ENCODE measurements at regions of chr21 and their contacts with region 1.

Region 1: DNA sequence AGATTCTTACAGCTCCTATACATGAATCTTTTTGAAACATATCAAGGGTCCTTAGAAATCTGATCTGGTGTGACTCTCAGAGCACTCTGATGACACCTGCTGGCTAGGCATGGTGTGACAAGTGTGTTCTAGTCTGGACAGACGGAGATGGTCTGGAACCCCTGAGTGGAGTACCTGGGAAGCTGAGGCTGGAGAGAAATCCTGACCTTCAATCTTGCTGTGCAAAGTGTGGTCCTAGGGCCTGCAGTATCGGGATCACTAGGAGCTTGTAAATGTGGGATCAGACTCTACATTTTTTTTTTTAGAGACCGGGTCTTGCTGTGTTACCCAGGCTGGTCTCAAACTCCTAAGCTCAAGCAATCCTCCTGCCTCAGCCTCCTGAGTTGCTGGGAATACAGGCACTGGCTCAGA is 78.6 kb upstream of the SOD1 start:
- DNase-seq: peak; percentile 35 to 81
- ATAC-seq: peak; percentile 80

Region 2: DNA sequence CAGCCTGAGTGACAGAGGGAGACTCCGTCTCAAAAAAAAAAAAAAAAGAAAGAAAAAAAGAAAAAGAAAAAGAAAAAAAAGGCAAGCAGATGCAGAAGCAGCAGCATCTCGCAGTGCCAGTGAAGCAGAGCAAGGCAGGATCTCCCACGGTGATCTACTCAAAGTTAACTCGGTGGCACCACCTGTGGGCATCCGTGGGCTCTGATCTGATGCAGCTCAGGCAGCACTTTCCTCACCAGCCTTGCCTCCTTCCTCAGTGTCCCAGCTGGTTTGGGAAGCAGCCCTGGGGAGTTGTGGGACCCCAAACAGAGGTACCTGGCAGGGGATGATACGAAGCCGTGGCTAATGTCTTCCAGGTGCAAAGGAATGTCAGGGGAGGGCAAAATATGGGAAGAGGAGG is 438.3 kb before region 1 on chr21:
- intact Hi-C with region 1: no loop called
- DNase-seq: no peak
- ATAC-seq: no peak

Region 3: GRCh38 chr21:31198575-31198974 is 382.3 kb before region 1 on chr21:
- intact Hi-C with region 1: loop called (anchors 5 to 10 kb)
- DNase-seq: no peak
- ATAC-seq: peak; percentile 67

Region 4: DNA sequence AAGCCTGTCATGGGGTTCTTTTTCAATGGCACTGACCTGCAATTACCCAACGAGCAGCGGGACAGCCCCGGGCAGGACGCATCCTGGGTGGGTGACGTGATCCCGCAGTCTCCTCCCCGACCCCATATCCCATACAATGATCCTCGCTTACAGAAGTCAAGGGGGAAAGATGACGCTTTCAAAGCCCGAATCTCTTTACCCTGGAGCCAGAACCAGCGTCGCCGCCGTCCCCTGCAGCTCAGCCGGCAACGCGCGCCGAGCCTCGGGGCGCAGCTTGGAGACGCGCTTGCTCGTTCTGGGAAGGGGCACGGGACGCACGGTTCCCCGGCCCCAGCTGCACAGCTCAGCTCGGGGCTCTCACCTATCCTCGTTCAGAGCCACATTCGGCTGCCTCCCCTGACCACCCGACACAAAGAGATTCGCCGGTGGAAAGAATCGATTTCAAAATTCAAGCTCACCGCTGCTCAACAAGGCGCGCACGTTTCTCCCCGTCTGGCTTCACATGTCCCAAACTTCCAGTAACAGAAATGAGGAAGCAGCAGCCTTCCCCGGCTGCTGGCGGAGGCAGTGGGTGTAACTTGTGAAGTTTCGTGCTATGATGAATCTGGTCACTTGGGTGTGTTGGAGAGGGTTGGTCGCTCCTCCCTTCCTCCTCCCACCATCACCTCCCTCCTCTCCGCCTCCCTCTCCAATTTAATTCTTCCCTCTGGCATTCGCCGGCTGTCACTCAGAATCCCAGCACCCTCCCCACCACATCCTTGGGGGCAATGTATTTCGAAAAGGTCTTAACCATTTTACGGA is 237.0 kb before region 1 on chr21 and contains the start of gene TIAM1:
- intact Hi-C with region 1: loop called in 1 of 2 experiments (anchors 10 kb)
- DNase-seq: peak; percentile 28 to 39
- ATAC-seq: peak; percentile 63
- total RNA-seq, gene TIAM1: 6.4 to 6.9 TPM

Region 5: GRCh38 chr21:31644643-31645042 is 63.8 kb after region 1 on chr21:
- intact Hi-C with region 1: no loop called
- DNase-seq: peak in 1 of 2 donors; percentile 62
- ATAC-seq: peak; percentile 96

Region 6: DNA sequence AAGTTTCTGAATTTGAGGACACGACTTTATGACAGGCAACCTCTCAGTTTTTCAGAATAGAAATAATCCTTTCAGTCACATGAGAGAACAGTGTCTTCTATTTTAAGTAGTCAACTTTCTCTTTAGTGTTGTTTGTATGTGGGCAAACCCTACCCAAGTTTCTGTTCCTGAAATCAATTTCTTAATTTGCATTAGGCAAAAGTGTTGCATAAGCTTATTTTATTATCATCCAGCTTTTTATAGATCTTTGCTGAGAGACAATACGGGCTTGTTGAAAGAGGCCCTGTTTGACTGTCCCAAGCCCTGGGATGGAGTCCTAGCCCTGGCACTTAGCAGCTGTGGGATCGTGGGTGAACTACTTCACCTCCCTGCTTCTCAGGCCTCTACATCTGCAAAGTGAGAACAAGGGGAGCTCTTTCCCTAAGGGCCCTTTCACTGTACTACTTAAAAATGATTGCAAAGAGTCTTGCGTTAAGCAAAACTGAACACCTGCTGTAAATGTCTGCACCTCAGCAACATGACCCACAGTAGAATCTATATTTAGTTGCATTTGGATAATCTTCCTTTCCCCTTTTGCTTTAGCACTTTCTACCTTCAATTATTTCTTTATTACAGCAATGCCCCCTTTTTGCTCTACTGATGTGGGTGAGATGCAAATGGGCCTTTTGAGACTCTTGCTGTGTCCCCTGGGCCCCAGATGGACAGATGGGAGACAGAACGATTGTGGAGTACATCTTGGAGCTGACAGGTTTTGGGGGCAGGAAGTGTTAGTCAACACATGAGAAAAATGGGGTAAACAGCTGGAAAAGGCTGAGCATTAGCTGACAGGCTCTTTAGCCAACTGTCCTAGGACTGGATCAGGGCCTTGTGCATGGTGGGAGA is 192.0 kb after region 1 on chr21:
- intact Hi-C with region 1: no loop called
- DNase-seq: no peak
- ATAC-seq: peak; percentile 26

Measured in left colon (tissue), 2 donors.